Vagina (tissue), 2 donors: ENCODE measurements at regions of chr2 and their contacts with region 1.

Region 1: DNA sequence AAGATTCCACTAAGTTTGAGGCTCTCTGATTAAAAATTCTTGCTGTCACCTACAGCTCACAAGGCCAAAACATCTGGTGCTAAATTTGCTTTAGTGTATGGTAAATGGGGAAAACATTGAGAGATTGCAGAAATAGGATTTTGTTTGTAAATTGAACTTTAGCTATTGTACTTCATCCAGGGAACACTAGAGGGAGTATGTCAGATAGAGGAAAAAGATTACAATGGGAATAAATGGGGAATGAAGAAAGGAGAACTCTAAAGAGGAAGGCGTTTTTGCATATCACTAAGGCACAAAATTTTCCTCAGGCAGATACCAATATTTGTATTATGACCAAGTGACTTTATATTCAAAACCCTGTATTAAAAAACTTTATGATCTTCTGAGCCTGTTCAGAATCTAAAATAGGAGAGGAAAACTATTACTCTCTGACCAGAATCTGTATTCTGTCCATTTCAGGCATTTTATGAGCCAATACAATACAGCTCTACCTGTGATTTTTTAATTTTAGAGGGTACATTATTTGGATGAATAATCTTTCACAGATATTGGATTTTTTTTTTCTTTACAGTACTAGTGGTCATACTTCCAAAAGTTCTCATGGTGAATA is 52.3 kb upstream of the ITGB6 start:
- DNase-seq: no peak
- H3K4me3 ChIP-seq: no peak overlapping the region
- H3K27ac ChIP-seq: no peak overlapping the region
- H3K4me1 ChIP-seq: peaks cover 1% of the 10 kb centered on the region
- H3K27me3 ChIP-seq: no peaks in the 10 kb centered on the region
- CTCF ChIP-seq: peak; percentile 34 to 77 (median 70)
- POLR2A ChIP-seq: no peak

Region 2: DNA sequence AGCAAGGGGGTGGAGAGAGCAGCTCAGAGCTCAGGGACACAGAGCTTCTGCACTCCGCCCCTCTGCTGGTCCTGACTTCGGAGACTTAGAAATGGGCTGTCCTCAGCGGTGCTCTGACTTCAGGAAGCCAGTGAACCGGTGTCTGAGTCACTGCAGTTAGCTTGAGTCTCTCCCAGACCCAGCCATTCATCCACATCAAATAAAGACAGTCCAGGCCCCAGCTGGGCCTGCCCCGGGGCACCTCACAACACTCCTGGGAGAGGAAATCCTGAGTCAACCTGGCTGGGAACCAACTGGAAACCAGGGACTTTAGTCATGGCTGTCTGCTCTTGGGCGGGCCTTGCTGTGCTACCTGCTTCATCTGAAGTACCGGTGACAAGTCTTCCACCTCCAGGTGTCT is 46.9 kb before region 1 on chr2:
- intact Hi-C with region 1: no loop called
- DNase-seq: no peak
- H3K4me3 ChIP-seq: no peak overlapping the region
- H3K27ac ChIP-seq: no peak overlapping the region
- H3K4me1 ChIP-seq: peaks cover 31% of the 10 kb centered on the region
- H3K27me3 ChIP-seq: no peaks in the 10 kb centered on the region
- CTCF ChIP-seq: no peak
- POLR2A ChIP-seq: no peak

Region 3: GRCh38 chr2:160445673-160446072 is 193.3 kb after region 1 on chr2:
- intact Hi-C with region 1: no loop called
- DNase-seq: no peak
- H3K4me3 ChIP-seq: no peak overlapping the region
- H3K27ac ChIP-seq: no peak overlapping the region
- H3K4me1 ChIP-seq: peaks cover 12% of the 10 kb centered on the region
- H3K27me3 ChIP-seq: no peaks in the 10 kb centered on the region
- CTCF ChIP-seq: no peak
- POLR2A ChIP-seq: no peak

Region 4: DNA sequence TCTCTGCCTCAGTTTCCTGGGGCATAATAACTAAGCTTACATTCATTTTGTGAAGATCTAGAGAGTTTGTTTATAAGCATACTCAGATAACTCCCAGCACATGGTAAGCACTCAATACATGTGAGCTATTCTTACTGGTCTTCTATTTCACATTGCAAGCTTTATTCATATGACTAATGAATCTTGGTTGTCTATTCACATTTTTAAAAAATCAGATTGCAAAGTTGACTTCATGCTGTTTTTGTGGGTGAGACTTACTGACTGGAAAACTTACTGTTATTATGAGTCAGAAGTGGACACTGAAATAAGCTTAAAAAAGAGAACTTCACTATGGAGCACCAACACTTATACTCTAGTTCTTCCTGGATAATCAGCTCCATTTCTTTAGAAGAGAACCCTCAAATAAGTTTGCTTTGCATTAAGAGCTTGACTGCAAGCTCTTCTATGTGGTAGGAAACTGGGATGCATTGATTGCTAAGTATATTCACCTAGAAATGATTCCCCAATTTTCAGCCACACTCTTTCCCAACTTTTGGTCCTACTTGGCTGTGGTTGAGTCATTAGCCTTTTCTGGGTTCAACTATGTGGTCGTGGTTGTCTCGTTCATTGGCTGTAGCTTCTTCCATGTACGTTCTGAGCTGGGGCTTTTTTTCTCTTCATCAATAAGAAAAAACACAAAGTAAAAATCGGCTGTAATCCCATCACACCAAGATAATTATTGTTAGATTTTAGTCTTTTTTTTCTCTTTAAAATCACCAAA is 270.7 kb after region 1 on chr2:
- intact Hi-C with region 1: no loop called
- DNase-seq: no peak
- H3K4me3 ChIP-seq: no peak overlapping the region
- H3K27ac ChIP-seq: no peak overlapping the region
- H3K4me1 ChIP-seq: no peaks in the 10 kb centered on the region
- H3K27me3 ChIP-seq: no peaks in the 10 kb centered on the region
- CTCF ChIP-seq: no peak
- POLR2A ChIP-seq: no peak

Region 5: DNA sequence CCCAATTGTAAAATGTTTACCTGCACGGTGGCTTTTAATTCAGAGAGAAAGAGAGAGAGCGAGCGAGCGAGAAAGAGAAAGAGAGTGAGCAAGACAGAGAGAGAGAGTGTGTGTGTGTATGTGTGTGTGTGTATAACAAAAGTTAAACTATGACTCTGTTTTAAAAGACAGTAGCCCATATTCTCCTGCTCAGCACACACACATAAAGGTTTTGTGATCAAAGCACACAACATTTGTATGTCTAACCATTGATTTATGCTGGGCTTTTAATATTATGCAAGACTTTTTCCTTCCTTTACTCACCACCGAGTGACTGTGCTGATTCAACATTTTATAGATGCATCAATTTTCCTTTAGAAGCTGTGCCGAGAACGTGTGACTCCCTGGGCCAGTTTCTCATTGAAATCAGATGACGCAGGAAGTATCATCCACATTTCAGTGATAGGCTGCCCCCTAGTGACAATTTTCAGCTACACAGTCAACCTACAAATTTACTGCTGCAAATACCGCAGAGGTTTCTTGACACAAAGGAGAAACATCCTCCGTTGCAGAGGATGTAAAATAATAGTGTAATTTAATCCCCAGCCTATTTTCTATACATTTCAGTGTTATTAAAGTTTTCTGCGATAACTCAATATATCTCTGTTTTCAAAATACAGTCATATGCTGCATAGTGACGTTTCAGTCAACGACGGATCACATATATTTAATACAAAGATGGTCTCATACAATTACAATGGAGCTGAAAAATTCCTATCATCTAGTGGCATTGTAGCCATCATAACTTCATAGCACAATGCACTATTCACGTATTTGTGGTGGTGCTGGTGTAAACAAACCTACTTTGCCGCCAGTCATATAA is 742.0 kb after region 1 on chr2:
- intact Hi-C with region 1: loop called (anchors 10 kb)
- DNase-seq: no peak
- H3K4me3 ChIP-seq: no peak overlapping the region
- H3K27ac ChIP-seq: peak overlapping the region; percentile 43
- H3K4me1 ChIP-seq: peaks cover 5% of the 10 kb centered on the region
- H3K27me3 ChIP-seq: no peaks in the 10 kb centered on the region
- CTCF ChIP-seq: peak; percentile 56 to 95 (median 83)
- POLR2A ChIP-seq: no peak